ENCODE measurements at regions of chr2 and their contacts with region 1.

Region 1: GRCh38 chr2:46569061-46569560 is 89.7 kb downstream of the TMEM247 start:
- DNase-seq: no peak
- ATAC-seq: peak; percentile 40

Region 2: DNA sequence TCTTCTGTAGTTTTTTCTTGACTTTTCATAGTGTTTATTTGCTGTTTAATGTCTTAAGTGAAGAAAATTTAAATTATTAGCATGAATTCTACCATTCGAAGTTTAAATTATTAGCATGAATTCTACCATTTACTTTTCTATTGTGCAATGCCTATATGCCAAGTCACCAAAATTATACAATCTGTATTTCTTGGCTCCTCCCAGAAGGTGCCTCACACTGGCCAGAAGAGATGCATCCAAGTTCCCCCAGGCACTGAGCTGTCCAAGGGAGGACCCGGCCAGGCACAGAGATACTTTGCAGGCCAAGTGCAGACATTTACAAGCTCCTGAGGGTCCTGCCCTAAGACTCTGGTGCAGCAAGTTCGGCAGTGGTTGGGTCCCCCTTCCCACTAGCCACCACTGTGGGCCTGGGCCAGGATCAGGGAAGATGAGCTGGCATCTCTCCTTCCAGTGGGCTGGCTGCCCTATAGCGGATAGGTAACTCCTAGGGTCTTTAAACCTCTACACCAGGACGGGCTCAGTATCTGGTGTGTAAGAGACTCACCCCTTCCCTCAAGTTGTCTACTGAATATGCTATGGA is 58.4 kb before region 1 on chr2:
- intact Hi-C with region 1: no loop called
- DNase-seq: no peak
- ATAC-seq: no peak

Region 3: GRCh38 chr2:46555011-46555410 is 14.1 kb before region 1 on chr2:
- intact Hi-C with region 1: loop called (anchors 2 kb)
- DNase-seq: no peak
- ATAC-seq: no peak

Region 4: DNA sequence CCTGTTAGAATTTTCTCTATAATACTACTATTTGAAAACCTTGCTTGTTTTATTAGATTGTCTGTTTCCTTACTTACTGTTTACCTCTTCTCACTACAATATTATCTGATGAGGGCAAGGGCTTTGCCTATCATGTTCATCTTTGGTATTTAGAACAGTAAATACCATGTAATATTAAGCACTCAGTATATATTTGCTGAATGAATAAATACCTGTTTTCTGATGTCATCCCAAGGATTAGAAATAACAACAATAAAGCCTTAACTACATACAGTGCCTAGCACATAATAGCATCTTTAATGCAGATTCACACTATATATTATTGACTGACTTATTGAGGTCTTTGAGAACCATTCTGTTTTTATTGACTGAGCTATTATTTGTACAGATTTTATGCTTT is 52.4 kb after region 1 on chr2:
- intact Hi-C with region 1: no loop called
- DNase-seq: no peak
- ATAC-seq: no peak

Region 5: DNA sequence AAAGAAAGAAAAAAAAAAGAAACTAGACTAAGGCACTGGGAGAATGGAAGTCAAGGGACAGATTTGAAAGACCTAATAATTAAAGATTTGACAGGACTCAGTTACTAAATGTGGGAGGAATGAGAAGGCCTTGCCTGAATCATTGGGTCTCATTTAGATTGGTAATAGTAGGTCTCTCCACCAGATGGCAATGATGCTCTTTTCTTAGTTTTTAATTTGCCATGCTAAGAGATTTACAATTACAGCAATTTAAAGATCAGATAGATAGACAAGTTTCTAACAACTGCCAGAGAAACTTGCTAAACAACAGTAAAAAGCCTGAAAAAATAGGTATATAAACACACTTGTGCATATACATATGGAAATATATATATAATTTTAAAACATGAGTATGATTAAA is 63.2 kb after region 1 on chr2:
- intact Hi-C with region 1: no loop called
- DNase-seq: no peak
- ATAC-seq: no peak

Measured in Right ventricle myocardium inferior (tissue), 1 donor.